ENCODE measurements at regions of chr12 and their contacts with region 1.

Region 1: GRCh38 chr12:124698211-124698997 is 131.0 kb upstream of the NCOR2 start:
- DNase-seq: no peak
- ATAC-seq: no peak
- H3K4me3 ChIP-seq: no peak overlapping the region
- H3K27ac ChIP-seq: no peak overlapping the region
- H3K4me1 ChIP-seq: peaks cover 18% of the 10 kb centered on the region
- CTCF ChIP-seq: no peak
- EP300 ChIP-seq: no peak
- POLR2A ChIP-seq: no peak
- RAD21 ChIP-seq: no peak

Region 2: DNA sequence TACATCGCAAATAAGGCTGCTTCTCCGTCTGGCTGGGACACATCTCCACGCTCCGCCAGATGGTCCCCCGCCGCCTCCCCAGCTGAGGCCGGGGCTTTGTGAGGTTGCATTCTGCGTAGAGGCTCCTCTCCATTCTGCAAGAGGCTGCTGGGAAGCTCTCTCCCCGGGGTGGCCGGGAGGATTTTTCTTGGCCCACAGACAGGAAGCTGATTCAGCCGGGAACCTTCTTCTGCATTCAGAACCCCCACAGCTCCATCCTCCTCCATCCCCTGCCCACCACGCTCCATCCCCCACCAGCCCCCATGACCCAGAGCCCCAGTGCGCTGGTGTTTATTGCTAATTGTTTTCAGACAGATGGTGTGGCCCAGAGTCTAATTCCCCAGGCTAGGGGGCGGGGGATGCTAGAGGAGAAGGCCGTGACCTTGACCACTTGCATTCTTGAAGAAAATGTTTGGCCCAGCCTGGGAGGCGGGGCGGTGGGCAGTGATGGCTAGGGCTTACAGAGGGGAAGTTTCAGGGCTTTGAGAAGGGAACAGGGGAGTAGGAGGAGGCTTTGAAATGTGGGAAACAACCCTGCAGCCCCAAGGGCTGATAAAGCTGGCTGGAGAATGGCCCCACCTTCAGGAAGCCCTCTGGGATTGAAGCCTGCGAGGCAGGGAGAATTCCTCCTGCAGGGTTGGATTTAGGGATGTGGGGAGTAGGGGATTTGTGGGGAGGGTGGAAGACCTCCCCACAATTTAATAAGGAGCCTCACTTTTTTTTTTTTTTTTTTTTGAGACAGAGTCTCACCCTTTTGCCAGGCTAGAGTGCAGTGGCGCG is 42.5 kb before region 1 on chr12:
- CTCF ChIA-PET with region 1: no interaction called
- POLR2A ChIA-PET with region 1: no interaction called
- DNase-seq: peak; percentile 44 to 45
- ATAC-seq: peak; percentile 31 to 73; a peak in 5 of 6 replicates
- H3K4me3 ChIP-seq: no peak overlapping the region
- H3K27ac ChIP-seq: peak overlapping the region; percentile 50 to 75; a peak in 4 of 6 replicates
- H3K4me1 ChIP-seq: peaks cover 23% of the 10 kb centered on the region
- CTCF ChIP-seq: no peak
- EP300 ChIP-seq: no peak
- POLR2A ChIP-seq: no peak
- RAD21 ChIP-seq: no peak

Region 3: DNA sequence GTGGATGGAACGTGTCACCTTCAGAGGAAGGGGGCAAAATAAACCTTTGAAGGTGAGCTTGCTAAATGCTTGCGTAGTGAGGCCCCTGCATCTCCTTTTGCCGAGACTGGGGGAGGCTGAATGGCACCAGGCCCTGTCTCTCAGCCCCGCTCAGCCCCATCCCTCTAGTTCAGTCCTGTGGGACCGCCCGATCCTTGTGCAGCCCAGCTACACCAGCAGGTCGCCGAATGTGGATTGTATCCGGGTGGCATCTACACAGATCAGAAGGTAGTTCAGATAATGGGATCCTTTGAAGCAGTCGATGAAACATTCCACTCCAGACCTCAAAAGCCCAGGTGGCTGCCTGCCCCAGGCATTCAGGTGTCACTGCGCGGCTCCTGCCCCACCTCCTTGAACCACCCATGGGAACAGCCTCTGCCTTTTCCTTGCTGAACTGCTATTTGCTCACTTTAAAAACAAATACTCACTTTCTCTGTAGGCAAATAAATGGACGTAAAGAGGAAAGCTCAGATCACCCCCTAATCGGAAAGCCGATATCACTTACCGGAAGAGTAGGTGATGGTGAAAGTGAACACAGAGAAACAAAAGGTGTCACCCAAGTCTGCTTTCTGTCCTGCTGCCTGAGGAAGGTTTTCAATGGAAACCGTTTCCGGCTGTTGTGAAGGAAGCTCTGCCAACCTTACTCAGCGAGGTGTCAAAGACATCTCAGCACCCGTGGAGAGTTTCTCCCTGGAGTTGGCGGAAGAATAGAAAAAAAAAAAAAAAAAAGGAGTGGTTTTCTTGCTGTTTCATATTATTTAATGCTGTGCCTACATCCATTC is 30.7 kb before region 1 on chr12:
- CTCF ChIA-PET with region 1: no interaction called
- POLR2A ChIA-PET with region 1: no interaction called
- DNase-seq: no peak
- ATAC-seq: no peak
- H3K4me3 ChIP-seq: no peak overlapping the region
- H3K27ac ChIP-seq: no peak overlapping the region
- H3K4me1 ChIP-seq: no peaks in the 10 kb centered on the region
- CTCF ChIP-seq: no peak
- EP300 ChIP-seq: no peak
- POLR2A ChIP-seq: no peak
- RAD21 ChIP-seq: no peak

Region 4: DNA sequence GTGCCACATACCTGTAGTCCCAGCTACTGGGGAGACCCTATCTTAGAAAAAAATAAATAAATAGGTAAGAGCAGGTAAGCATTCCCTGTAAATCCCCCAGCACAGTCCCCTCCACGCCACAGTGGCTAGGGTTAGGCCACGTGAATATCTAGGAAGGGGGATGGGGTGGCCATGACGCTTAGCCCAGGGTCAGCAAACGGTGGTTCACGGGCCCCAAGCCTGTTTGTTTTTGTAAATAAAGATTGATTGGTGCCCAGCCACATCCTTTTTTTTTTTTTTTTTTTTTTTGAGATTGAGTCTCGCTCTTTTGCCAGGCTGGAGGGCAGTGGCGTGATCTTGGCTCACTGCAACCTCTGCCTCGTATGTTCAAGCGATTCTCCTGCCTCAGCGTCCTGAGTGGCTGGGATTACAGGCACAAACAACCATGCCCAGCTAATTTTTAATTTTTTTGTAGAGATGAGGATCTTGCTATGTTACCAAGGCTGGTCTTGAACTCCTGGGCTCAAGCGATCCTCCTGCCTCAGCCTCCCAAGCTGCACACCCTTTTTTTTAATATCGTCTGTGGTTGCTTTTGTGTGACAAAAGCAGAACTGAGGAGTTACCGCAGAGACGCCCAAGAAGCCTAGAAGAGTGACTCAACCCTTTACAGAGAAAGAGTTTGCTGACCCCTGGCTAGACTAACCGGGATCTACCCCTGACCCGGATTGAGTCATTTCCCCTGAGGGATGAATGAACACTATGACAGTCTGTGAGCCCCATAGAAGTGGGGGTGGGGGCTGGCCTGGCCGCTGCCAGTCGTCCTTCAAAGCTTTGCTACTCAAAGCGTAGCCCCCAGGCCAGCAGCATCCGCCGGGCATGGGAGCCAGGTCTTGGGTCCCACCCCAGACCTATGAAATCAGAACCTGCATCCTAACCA is 17.3 kb before region 1 on chr12:
- CTCF ChIA-PET with region 1: interaction called, 11 read pairs
- POLR2A ChIA-PET with region 1: interaction called, 3 read pairs
- DNase-seq: peak; percentile 95 to 98
- ATAC-seq: peak; percentile 82 to 86
- H3K4me3 ChIP-seq: no peak overlapping the region
- H3K27ac ChIP-seq: peak overlapping the region; percentile 87 to 96
- H3K4me1 ChIP-seq: peaks cover 71% of the 10 kb centered on the region
- CTCF ChIP-seq: peak; percentile 44; the same call in 2 of the 3 replicates
- EP300 ChIP-seq: peak; percentile 64 to 67; a peak in 3 of 5 replicates
- POLR2A ChIP-seq: no peak
- RAD21 ChIP-seq: peak; percentile 73 to 79

Measured in A549 (cell line).